Activated CD4-positive, alpha-beta T cell treated with anti-CD3 and anti-CD28 coated beads, Interleukin-2, amount 10 ng/mL, durations not matched to agents 24 days and 14 days (primary cell): ENCODE measurements at regions of chr14 and their contacts with region 1.

Region 1: GRCh38 chr14:22570132-22570949 is 18.7 kb downstream of the DAD1 start:
- DNase-seq: peak; percentile 96
- H3K4me3 Mint-ChIP-seq: peak overlapping the region; percentile 92
- H3K27ac Mint-ChIP-seq: peak overlapping the region; percentile 95
- H3K4me1 Mint-ChIP-seq: peaks cover 59% of the 10 kb centered on the region
- H3K27me3 Mint-ChIP-seq: no peaks in the 10 kb centered on the region

Region 2: GRCh38 chr14:21868442-21869046 is 701.8 kb before region 1 on chr14:
- intact Hi-C with region 1: loop called (anchors 1 kb)
- DNase-seq: peak; percentile 94
- H3K4me3 Mint-ChIP-seq: peak overlapping the region; percentile 67
- H3K27ac Mint-ChIP-seq: peak overlapping the region; percentile 69
- H3K4me1 Mint-ChIP-seq: peaks cover 22% of the 10 kb centered on the region
- H3K27me3 Mint-ChIP-seq: peaks cover 4% of the 10 kb centered on the region

Region 3: GRCh38 chr14:22531451-22532344 is 38.6 kb before region 1 on chr14:
- intact Hi-C with region 1: loop called (anchors 5 kb)
- DNase-seq: no peak
- H3K4me3 Mint-ChIP-seq: peak overlapping the region; percentile 81
- H3K27ac Mint-ChIP-seq: peak overlapping the region; percentile 94
- H3K4me1 Mint-ChIP-seq: peaks cover 82% of the 10 kb centered on the region
- H3K27me3 Mint-ChIP-seq: no peaks in the 10 kb centered on the region

Region 4: DNA sequence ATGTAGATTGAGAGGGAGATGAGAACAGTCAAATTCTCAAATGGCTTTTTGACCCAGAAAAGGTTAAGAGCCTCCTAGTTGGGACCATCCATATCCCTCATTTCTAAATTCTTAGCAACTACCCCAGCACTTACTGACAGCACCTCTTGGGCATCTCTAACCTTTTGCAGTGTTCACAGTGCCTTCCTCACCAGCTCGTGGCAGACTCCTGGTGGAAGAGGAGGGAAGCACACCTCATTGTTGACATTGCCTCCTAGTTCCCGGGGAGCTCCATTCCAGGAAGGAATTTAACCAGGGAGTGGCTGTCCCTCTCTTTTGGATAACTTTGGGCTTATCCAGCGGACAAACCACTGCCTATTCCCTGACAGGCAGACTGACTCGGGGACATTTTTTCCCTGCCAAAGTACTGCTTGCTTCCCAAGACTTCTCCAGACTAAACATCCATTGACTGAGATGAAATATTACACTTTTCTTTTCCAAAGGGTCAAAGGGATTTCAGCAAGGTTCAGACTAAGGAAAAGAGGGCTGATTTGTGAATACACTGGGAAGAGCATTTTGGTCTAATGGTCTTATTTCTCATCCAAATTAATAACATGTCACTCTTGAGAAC is 82.8 kb after region 1 on chr14:
- intact Hi-C with region 1: loop called (anchors 1 kb)
- DNase-seq: peak; percentile 85
- H3K4me3 Mint-ChIP-seq: no peak overlapping the region
- H3K27ac Mint-ChIP-seq: no peak overlapping the region
- H3K4me1 Mint-ChIP-seq: no peaks in the 10 kb centered on the region
- H3K27me3 Mint-ChIP-seq: no peaks in the 10 kb centered on the region

Region 5: GRCh38 chr14:22766456-22767322 is 196.3 kb after region 1 on chr14 and contains the start of gene OXA1L:
- intact Hi-C with region 1: loop called (anchors 1 kb)
- DNase-seq: peak; percentile 98
- H3K4me3 Mint-ChIP-seq: peak within 1 kb of the TSS; percentile 94
- H3K27ac Mint-ChIP-seq: peak within 1 kb of the TSS; percentile 96
- H3K4me1 Mint-ChIP-seq: peaks cover 27% of the 10 kb centered on the region
- H3K27me3 Mint-ChIP-seq: no peaks in the 10 kb centered on the region
- total RNA-seq, gene OXA1L: 119 and 126 TPM in 2 replicates

Region 6: DNA sequence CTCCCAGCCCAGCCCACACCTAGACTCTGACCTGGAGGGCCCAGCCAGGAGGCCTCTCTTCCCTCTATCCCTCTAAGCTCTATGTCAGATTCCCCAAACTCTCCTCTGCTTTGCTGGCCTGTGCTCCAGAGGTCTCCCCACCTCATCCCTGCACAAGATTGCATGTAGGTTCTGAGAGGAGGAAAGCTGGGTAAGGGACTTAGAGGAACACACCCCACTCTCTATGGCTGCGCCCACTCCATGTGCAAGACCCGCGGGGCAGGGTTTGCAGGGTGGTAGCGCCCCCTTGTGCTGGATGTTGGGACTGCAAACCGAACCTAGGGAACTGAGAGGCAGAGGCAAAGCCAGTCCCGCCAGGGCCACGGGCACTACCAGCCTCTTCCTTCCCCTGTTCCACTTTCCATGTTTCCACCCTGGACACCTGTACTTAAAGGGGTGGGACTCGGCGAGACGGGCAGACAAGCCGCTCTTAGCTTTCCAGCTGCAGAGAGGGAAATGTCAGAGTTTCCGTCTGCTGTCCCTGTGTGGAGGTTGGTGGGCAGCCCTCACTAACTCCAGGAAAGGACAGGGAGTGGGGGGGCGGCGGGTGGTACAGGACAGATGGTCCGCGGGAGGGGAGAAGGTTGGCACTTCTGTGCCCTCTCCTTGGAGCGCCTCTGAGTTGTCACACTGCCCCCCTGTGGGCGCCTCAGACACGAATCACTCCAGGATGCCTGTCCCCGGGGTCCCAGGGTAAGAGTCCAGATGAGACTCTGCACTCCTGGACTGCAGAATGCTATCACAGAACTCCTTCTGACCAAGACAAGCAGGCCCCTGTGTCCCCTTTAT is 282.8 kb after region 1 on chr14:
- intact Hi-C with region 1: loop called (anchors 1 kb)
- DNase-seq: peak; percentile 97
- H3K4me3 Mint-ChIP-seq: peak overlapping the region; percentile 87
- H3K27ac Mint-ChIP-seq: peak overlapping the region; percentile 78
- H3K4me1 Mint-ChIP-seq: peaks cover 33% of the 10 kb centered on the region
- H3K27me3 Mint-ChIP-seq: peaks cover 10% of the 10 kb centered on the region

Region 7: GRCh38 chr14:22900081-22900799 is 329.9 kb after region 1 on chr14:
- intact Hi-C with region 1: loop called (anchors 2 kb)
- DNase-seq: peak; percentile 87
- H3K4me3 Mint-ChIP-seq: no peak overlapping the region
- H3K27ac Mint-ChIP-seq: peak overlapping the region; percentile 1
- H3K4me1 Mint-ChIP-seq: peaks cover 14% of the 10 kb centered on the region
- H3K27me3 Mint-ChIP-seq: no peaks in the 10 kb centered on the region